ENCODE measurements at regions of chr15 and their contacts with region 1.

Region 1: GRCh38 chr15:52780172-52780980 is 9.8 kb downstream of the ONECUT1 start:
- DNase-seq: peak; percentile 82
- ATAC-seq: peak; percentile 70
- H3K4me3 Mint-ChIP-seq: no peak overlapping the region
- H3K27ac Mint-ChIP-seq: no peak overlapping the region
- H3K4me1 Mint-ChIP-seq: peaks cover 29% of the 10 kb centered on the region
- H3K27me3 Mint-ChIP-seq: peaks cover 63% of the 10 kb centered on the region

Region 2: DNA sequence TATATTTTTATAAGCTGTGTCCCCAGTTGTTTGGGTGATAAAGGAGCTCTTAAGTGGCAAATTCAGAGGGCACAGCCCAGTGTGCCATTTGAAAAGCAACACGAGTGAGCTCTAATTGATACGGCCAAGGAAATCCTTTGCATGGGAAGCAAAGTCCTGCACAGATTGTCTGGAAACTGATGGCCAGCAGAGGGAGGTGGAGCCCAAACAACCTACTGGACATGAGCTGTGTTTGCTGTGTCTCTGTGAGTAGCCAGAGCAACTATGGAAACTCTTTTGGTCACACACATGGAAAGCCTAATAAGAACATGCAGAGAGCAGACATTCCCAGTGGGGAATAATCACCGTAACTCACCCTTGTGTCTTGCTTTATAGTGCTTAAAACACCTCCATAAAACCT is 14.6 kb before region 1 on chr15:
- CTCF ChIA-PET with region 1: interaction called, 22 read pairs
- POLR2A ChIA-PET with region 1: no interaction called
- intact Hi-C with region 1: no loop called
- DNase-seq: no peak
- ATAC-seq: no peak
- H3K4me3 Mint-ChIP-seq: no peak overlapping the region
- H3K27ac Mint-ChIP-seq: no peak overlapping the region
- H3K4me1 Mint-ChIP-seq: no peaks in the 10 kb centered on the region
- H3K27me3 Mint-ChIP-seq: peaks cover 40% of the 10 kb centered on the region

Region 3: GRCh38 chr15:52797625-52798501 is 17.5 kb after region 1 on chr15:
- CTCF ChIA-PET with region 1: interaction called, 19 read pairs
- POLR2A ChIA-PET with region 1: no interaction called
- intact Hi-C with region 1: loop called in 1 of 2 experiments (anchors 1 kb)
- DNase-seq: no peak
- ATAC-seq: no peak
- H3K4me3 Mint-ChIP-seq: no peak overlapping the region
- H3K27ac Mint-ChIP-seq: no peak overlapping the region
- H3K4me1 Mint-ChIP-seq: peaks cover 26% of the 10 kb centered on the region
- H3K27me3 Mint-ChIP-seq: peaks cover 85% of the 10 kb centered on the region

Region 4: GRCh38 chr15:52805351-52806283 is 25.2 kb after region 1 on chr15:
- CTCF ChIA-PET with region 1: interaction called, 20 read pairs
- POLR2A ChIA-PET with region 1: no interaction called
- intact Hi-C with region 1: no loop called
- DNase-seq: peak; percentile 49
- ATAC-seq: peak; percentile 39
- H3K4me3 Mint-ChIP-seq: no peak overlapping the region
- H3K27ac Mint-ChIP-seq: no peak overlapping the region
- H3K4me1 Mint-ChIP-seq: peaks cover 19% of the 10 kb centered on the region
- H3K27me3 Mint-ChIP-seq: peaks cover 65% of the 10 kb centered on the region

Region 5: GRCh38 chr15:53197426-53197839 is 417.1 kb after region 1 on chr15:
- CTCF ChIA-PET with region 1: interaction called, 3 read pairs
- POLR2A ChIA-PET with region 1: no interaction called
- intact Hi-C with region 1: loop called (anchors 1 kb)
- DNase-seq: peak; percentile 77
- ATAC-seq: peak; percentile 73
- H3K4me3 Mint-ChIP-seq: no peak overlapping the region
- H3K27ac Mint-ChIP-seq: no peak overlapping the region
- H3K4me1 Mint-ChIP-seq: no peaks in the 10 kb centered on the region
- H3K27me3 Mint-ChIP-seq: peaks cover 18% of the 10 kb centered on the region

Region 6: GRCh38 chr15:53586799-53587198 is 806.4 kb after region 1 on chr15:
- CTCF ChIA-PET with region 1: no interaction called
- POLR2A ChIA-PET with region 1: no interaction called
- intact Hi-C with region 1: loop called in 1 of 2 experiments (anchors 2 kb)
- DNase-seq: peak; percentile 61
- ATAC-seq: no peak
- H3K4me3 Mint-ChIP-seq: no peak overlapping the region
- H3K27ac Mint-ChIP-seq: no peak overlapping the region
- H3K4me1 Mint-ChIP-seq: no peaks in the 10 kb centered on the region
- H3K27me3 Mint-ChIP-seq: peaks cover under 1% of the 10 kb centered on the region

Region 7: GRCh38 chr15:53716909-53717876 is 936.8 kb after region 1 on chr15:
- CTCF ChIA-PET with region 1: no interaction called
- POLR2A ChIA-PET with region 1: no interaction called
- intact Hi-C with region 1: loop called (anchors 1 to 5 kb)
- DNase-seq: no peak
- ATAC-seq: no peak
- H3K4me3 Mint-ChIP-seq: no peak overlapping the region
- H3K27ac Mint-ChIP-seq: no peak overlapping the region
- H3K4me1 Mint-ChIP-seq: no peaks in the 10 kb centered on the region
- H3K27me3 Mint-ChIP-seq: no peaks in the 10 kb centered on the region